ENCODE measurements at regions of chr2 and their contacts with region 1.

Region 1: GRCh38 chr2:9813312-9814133 is 29.8 kb upstream of the TAF1B start:
- DNase-seq: no peak
- ATAC-seq: peak; percentile 98
- H3K4me3 ChIP-seq: no peak overlapping the region
- H3K27ac ChIP-seq: no peak overlapping the region
- H3K4me1 ChIP-seq: no peaks in the 10 kb centered on the region
- H3K27me3 ChIP-seq: no peaks in the 10 kb centered on the region; a peak in 2 of 4 replicates
- CTCF ChIP-seq: peak; percentile 95 to 96 (median 96)
- EP300 ChIP-seq: no peak
- POLR2A ChIP-seq: no peak
- RAD21 ChIP-seq: peak; percentile 85

Region 2: DNA sequence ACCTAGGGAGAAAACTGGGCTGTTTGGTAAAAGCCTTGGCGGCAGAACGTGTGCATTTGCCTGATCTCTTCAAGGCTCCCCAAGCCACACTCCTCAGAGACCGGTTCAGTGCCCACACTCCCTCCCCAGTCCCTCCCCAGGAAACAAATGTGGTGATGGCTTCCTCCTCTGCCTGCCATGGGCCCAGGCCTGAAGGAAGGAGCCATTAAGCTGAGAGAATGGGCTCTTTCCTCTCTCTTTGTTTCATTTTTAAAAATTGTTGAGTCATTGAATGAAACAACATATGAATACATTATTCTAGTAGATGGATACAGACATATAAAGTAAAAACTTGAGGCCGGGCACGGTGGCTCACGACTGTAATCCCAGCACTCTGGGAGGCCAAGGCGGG is 132.1 kb before region 1 on chr2:
- CTCF ChIA-PET with region 1: no interaction called
- POLR2A ChIA-PET with region 1: no interaction called
- RAD21 ChIA-PET with region 1: no interaction called
- SMC1A ChIA-PET with region 1: no interaction called
- in situ Hi-C with region 1: no loop called
- intact Hi-C with region 1: no loop called
- DNase-seq: no peak
- ATAC-seq: peak; percentile 34; the same call in 2 of the 3 replicates
- H3K4me3 ChIP-seq: no peak overlapping the region
- H3K27ac ChIP-seq: no peak overlapping the region
- H3K4me1 ChIP-seq: peaks cover 5% of the 10 kb centered on the region; the same call in 1 of the 2 replicates
- H3K27me3 ChIP-seq: no peaks in the 10 kb centered on the region
- CTCF ChIP-seq: no peak
- EP300 ChIP-seq: no peak
- POLR2A ChIP-seq: no peak
- RAD21 ChIP-seq: no peak

Region 3: DNA sequence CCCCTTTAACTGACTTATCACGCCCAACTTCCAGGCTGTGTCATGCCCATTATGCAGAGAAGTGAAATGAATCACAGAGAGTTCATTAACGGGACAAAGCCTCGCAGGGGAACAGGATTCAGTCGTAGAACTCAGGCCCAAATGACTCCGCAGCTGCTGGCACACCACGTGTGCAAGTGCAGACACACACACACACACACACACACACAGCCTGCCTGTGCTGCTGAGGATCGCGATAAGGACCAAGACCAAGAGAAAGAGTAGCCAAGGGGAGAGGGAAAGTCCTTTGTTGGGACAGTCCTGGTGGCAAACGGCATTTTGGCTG is 60.3 kb before region 1 on chr2:
- CTCF ChIA-PET with region 1: no interaction called
- POLR2A ChIA-PET with region 1: no interaction called
- RAD21 ChIA-PET with region 1: no interaction called
- SMC1A ChIA-PET with region 1: no interaction called
- in situ Hi-C with region 1: no loop called
- intact Hi-C with region 1: no loop called
- DNase-seq: peak; percentile 69
- ATAC-seq: peak; percentile 90
- H3K4me3 ChIP-seq: peak overlapping the region; percentile 23; the same call in 1 of the 2 replicates
- H3K27ac ChIP-seq: peak overlapping the region; percentile 7
- H3K4me1 ChIP-seq: peaks cover 47% of the 10 kb centered on the region
- H3K27me3 ChIP-seq: peaks cover 3 to 13% of the 10 kb centered on the region in 2 experiments
- CTCF ChIP-seq: no peak
- EP300 ChIP-seq: peak; percentile 37 to 47; a peak in 2 of 4 replicates
- POLR2A ChIP-seq: no peak
- RAD21 ChIP-seq: no peak

Region 4: DNA sequence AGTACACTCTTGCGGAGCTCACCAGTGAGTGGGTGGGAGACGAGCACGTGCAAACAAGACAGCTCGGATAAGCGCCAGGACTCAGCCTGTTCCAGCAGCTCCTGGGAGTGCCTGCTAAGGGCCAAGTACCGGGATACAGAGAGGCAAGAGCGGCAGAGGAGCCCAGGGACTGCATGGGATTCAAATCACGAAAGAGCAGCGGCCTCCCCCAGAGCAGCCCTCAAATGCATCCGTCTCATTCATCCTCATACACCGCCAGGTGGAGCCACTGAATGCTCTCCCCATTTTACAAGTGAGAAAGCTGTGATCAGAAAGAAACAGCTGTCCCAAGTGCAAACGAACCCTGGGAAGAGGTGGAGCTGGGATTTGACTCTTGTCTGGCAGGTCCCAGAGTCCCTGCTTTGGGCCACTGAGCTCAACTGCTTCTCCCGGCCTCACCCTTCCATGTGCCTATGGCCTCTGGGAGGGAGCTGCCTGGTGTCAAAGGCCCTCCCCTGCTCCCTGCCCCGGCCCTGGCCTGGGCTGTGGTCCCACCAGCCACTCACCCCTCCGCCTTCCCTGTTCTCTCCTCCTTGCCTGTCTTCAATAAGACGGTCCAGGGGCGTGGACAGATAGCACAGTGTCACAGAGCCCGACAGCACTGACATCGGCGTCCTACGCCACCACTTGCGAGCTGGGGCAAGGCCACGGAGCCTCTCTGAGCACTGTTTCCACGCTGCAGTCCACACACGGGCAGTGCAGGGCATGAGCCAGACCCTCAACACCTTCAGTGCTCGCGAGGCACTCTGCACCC is 43.0 kb before region 1 on chr2:
- CTCF ChIA-PET with region 1: interaction called, 21 read pairs
- POLR2A ChIA-PET with region 1: no interaction called
- RAD21 ChIA-PET with region 1: no interaction called
- SMC1A ChIA-PET with region 1: interaction called, 4 read pairs
- in situ Hi-C with region 1: no loop called
- intact Hi-C with region 1: no loop called
- DNase-seq: no peak
- ATAC-seq: peak; percentile 83
- H3K4me3 ChIP-seq: no peak overlapping the region
- H3K27ac ChIP-seq: no peak overlapping the region
- H3K4me1 ChIP-seq: peaks cover 6% of the 10 kb centered on the region; the same call in 1 of the 2 replicates
- H3K27me3 ChIP-seq: no peaks in the 10 kb centered on the region; a peak in 2 of 4 replicates
- CTCF ChIP-seq: peak; percentile 61 to 74 (median 73)
- EP300 ChIP-seq: no peak
- POLR2A ChIP-seq: no peak
- RAD21 ChIP-seq: peak; percentile 58

Region 5: DNA sequence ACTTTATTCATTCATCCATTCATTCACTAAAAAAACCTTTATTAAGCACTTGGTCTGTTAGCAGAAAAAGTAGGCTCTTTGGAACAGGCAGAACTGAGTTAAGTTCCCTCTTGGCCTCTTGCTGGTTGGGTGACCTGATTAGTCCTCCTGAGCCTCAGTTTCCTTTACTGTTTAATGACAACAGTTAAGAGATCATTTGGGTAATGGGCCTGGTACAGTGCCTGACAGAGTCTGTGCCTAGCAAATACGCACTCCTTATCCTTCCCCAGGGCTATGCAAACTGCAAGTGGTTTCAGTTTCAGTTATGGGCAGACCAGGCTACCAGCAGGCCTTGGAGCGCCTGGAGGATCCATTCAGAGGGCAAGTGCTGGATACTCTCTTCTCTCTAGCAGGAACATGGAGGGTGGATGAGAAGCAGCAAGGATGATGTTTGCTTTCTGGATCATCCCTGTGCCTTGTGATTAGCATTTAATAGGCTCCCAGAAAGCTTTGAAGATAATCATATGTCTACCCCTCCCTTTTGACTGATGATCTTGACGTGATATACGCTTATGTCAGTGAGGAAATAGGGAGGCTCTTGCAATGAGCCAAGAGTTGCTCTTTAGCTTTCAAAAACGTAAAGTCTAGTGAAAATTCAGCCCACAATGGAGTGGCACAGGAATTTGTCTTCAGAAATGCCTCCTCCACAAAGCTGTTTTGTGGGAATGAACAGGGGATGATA is 17.3 kb after region 1 on chr2:
- CTCF ChIA-PET with region 1: no interaction called
- POLR2A ChIA-PET with region 1: no interaction called
- RAD21 ChIA-PET with region 1: no interaction called
- SMC1A ChIA-PET with region 1: no interaction called
- in situ Hi-C with region 1: no loop called
- intact Hi-C with region 1: no loop called
- DNase-seq: no peak
- ATAC-seq: peak; percentile 38; the same call in 1 of the 3 replicates
- H3K4me3 ChIP-seq: no peak overlapping the region
- H3K27ac ChIP-seq: no peak overlapping the region
- H3K4me1 ChIP-seq: no peaks in the 10 kb centered on the region
- H3K27me3 ChIP-seq: no peaks in the 10 kb centered on the region; a peak in 1 of 4 replicates
- CTCF ChIP-seq: no peak
- EP300 ChIP-seq: no peak
- POLR2A ChIP-seq: no peak
- RAD21 ChIP-seq: no peak

Region 6: DNA sequence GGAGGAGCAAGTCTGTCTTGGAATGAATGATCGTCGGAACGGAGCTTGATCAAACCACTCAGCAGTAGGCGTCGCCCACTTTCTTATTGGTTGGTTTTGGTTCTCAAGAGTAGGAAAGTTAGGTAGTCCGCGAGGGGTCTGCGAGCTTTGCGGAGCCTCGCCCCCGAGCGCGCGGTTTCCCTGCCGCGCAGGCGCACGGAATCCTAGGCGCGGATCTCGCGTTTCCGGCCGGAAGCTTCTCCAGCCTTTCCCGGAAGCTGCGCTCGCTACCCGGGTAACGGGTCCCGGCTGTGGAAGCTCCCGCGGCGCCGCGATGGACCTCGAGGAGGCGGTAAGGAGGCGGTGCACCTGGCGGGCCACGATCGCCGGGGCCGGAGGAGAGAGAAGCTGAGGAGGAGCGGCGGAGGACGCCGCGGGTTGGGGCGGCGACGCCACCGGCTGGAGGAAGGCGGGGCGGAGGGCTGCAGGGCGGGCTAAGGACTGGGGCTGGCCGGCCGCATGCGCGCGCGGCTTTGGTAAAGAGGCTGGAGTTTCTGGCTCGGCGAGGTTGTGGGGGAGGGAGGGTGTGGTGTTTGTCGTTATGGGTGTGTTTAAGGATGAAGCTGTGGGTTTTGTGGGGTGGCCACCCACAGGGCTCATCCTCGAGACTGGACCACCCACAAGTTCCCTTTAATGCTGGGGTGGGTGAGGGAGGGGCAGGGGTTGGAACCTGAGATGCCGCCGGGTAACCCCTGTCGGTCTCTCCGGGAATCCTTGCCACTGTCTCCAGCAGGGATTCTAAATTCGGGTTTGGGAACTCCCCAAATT is 29.9 kb after region 1 on chr2 and contains the start of gene TAF1B:
- CTCF ChIA-PET with region 1: interaction called, 38 read pairs
- POLR2A ChIA-PET with region 1: no interaction called
- RAD21 ChIA-PET with region 1: interaction called, 9 read pairs
- SMC1A ChIA-PET with region 1: interaction called, 3 read pairs
- in situ Hi-C with region 1: no loop called
- intact Hi-C with region 1: no loop called
- DNase-seq: peak; percentile 72
- ATAC-seq: peak; percentile 93
- H3K4me3 ChIP-seq: peak within 1 kb of the TSS; percentile 70
- H3K27ac ChIP-seq: peak within 1 kb of the TSS; percentile 51
- H3K4me1 ChIP-seq: peaks cover 3% of the 10 kb centered on the region; the same call in 1 of the 2 replicates
- H3K27me3 ChIP-seq: no peaks in the 10 kb centered on the region
- CTCF ChIP-seq: peak; percentile 31 to 40 (median 37); a peak in 5 of 6 replicates
- EP300 ChIP-seq: no peak
- POLR2A ChIP-seq: peak; percentile 86
- RAD21 ChIP-seq: 0 out of 2 replicates have a peak, but pooled peaks have one; percentile 9
- polyA plus RNA-seq, gene TAF1B: 9.4 to 9.9 TPM

Region 7: DNA sequence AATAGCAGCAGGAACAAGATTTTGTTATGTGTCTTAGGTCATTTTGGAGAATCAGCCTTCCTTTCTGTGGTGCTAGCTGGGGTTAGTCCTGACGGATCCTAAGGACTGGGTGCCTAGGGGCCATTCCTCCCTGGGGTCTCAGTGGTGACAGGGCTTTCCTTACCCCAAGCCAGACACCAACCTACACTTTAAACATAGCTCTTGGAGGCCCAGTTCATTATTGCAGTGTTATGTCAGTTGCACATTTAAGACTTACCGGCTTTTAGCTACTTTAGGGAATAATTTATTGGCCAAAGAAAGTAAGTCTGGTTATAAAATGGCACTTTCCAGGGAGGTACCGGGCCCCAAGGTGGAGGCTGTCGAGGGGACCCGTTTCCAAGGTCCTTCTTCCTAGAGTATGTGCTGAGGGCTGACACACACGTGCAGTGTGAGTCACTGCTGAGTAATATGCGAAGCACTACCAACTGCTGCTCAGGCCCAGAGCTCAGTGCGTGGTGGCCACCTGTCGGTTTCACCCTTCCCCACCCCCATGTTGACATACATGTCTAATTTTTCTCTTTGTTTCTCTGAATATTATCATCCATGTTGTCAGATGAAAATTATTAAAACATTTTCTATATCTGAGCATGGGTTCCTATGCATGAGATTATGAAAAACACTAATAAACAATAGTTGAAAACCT is 101.0 kb after region 1 on chr2:
- CTCF ChIA-PET with region 1: interaction called, 67 read pairs
- POLR2A ChIA-PET with region 1: interaction called, 4 read pairs
- RAD21 ChIA-PET with region 1: interaction called, 27 read pairs
- SMC1A ChIA-PET with region 1: interaction called, 21 read pairs
- in situ Hi-C with region 1: no loop called
- intact Hi-C with region 1: loop called (anchors 1 kb)
- DNase-seq: peak; percentile 45
- ATAC-seq: peak; percentile 100
- H3K4me3 ChIP-seq: no peak overlapping the region
- H3K27ac ChIP-seq: peak overlapping the region; percentile 27; the same call in 1 of the 2 replicates
- H3K4me1 ChIP-seq: peaks cover 9% of the 10 kb centered on the region
- H3K27me3 ChIP-seq: no peaks in the 10 kb centered on the region
- CTCF ChIP-seq: peak; percentile 44 to 78 (median 44); a peak in 5 of 6 replicates
- EP300 ChIP-seq: peak; percentile 39 to 53; a peak in 1 of 4 replicates
- POLR2A ChIP-seq: no peak
- RAD21 ChIP-seq: peak; percentile 67

Region 8: DNA sequence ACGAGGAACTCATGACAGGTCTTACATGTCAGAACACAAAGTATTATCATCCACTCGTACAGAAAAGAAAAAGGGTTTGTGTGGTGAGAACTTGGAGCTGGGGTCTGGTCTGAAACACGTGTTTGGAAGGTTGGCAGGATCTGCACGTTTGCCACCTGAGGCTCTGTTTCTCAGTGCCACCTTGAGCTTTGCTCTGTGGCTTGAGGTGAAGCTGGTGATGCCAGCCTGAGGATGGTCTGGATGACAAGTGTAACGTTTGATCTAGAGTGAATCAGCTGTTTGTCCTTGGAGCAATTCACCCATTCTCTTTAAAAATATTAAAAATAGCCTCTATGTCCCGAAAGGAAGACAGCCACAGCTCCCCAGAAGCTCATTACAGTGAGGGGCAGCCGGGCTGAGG is 184.4 kb after region 1 on chr2:
- CTCF ChIA-PET with region 1: no interaction called
- POLR2A ChIA-PET with region 1: no interaction called
- RAD21 ChIA-PET with region 1: no interaction called
- SMC1A ChIA-PET with region 1: no interaction called
- in situ Hi-C with region 1: no loop called
- intact Hi-C with region 1: no loop called
- DNase-seq: no peak
- ATAC-seq: no peak
- H3K4me3 ChIP-seq: no peak overlapping the region
- H3K27ac ChIP-seq: no peak overlapping the region
- H3K4me1 ChIP-seq: no peaks in the 10 kb centered on the region
- H3K27me3 ChIP-seq: no peaks in the 10 kb centered on the region
- CTCF ChIP-seq: no peak
- EP300 ChIP-seq: no peak
- POLR2A ChIP-seq: no peak
- RAD21 ChIP-seq: no peak

Region 9: GRCh38 chr2:10043906-10044601 is 230.5 kb after region 1 on chr2:
- CTCF ChIA-PET with region 1: interaction called, 82 read pairs
- POLR2A ChIA-PET with region 1: no interaction called
- RAD21 ChIA-PET with region 1: interaction called, 36 read pairs
- SMC1A ChIA-PET with region 1: interaction called, 19 read pairs
- in situ Hi-C with region 1: loop called (anchors 5 kb)
- intact Hi-C with region 1: loop called (anchors 1 kb)
- DNase-seq: no peak
- ATAC-seq: peak; percentile 54
- H3K4me3 ChIP-seq: no peak overlapping the region
- H3K27ac ChIP-seq: no peak overlapping the region
- H3K4me1 ChIP-seq: no peaks in the 10 kb centered on the region
- H3K27me3 ChIP-seq: peaks cover 0 to 4% of the 10 kb centered on the region in 2 experiments; a peak in 1 of 4 replicates
- CTCF ChIP-seq: no peak
- EP300 ChIP-seq: no peak
- POLR2A ChIP-seq: no peak
- RAD21 ChIP-seq: no peak